Posterior vena cava (tissue), 2 donors: ENCODE measurements at regions of chr17 and their contacts with region 1.

Region 1: DNA sequence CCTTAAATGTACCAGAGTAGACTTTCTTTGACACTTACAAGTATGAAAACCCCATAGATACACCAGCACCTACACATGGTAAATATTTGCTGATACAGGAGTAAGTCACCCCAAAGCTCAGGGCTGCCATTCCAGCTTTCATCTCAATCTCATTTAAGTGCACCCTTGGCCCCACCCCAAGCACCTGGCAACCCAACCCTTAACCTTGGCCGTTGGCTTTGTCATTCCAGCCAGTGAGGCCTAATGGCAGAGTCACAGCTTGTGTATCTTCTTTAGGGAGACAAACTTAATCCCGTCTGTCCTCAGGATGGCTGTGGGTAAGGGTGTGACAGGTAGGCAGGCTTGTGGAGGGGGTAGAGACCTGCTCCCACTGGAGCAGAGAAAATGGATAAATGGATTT is 31.5 kb upstream of the TMEM220 start:
- DNase-seq: no peak

Region 2: GRCh38 chr17:11869680-11870394 is 1108.6 kb after region 1 on chr17:
- intact Hi-C with region 1: loop called in 1 of 2 experiments (anchors 5 kb)
- DNase-seq: no peak